ENCODE measurements at regions of chr5 and their contacts with region 1.

Region 1: GRCh38 chr5:43389679-43390329 is 22.4 kb downstream of the CCL28 start:
- DNase-seq: peak; percentile 74
- H3K4me3 ChIP-seq: no peak overlapping the region
- H3K27ac ChIP-seq: no peak overlapping the region
- H3K4me1 ChIP-seq: no peaks in the 10 kb centered on the region
- H3K27me3 ChIP-seq: no peaks in the 10 kb centered on the region
- CTCF ChIP-seq: peak; percentile 50 to 91 (median 82)
- POLR2A ChIP-seq: no peak

Region 2: DNA sequence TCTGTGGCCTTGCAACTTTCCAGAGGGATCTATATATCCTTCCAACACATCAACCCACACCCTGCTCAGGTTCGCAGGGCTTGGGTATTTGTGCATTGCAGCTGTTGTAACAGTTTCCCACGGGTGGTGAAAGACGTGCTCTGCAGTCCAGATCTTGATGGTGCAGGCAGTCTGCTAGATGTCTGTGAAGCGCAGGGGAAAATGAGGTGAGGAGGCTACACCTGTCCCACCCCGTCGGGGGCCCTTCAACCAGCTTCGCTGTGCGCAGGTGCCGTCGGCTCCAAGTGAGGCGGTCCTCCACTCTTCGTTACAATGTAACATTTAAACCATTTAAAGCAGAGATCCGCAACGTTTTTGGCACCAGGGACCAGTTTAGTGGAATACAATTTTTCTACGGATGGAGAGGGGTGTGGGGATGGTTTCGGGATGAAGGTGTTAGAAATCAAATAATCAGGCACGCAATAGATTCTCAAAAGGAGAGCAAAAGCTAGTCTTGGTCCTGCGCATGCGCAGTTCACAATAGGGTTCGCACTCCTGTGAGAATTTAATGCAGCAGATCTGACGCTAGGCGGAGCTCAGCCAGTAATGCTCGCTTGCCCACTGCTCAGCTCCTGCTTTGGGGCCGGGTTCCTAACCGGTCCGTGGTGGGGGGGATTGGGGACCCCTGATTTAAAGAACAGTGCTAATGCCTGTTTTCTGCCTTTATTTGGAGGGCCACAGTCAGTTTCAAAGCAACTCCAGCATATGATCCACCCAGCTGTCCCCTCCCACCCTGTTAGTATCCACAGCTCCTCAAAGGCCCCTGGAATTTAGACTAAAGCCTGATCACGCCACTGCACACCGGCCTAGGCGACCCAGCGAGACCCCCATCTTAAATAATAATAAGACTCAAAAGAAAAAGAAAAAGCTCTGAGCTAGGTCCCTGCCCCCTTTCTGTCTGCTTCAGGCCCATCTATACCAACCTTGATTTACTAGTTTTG is 481.0 kb before region 1 on chr5:
- intact Hi-C with region 1: loop called (anchors 10 kb)
- DNase-seq: peak; percentile 90
- H3K4me3 ChIP-seq: peak overlapping the region; percentile 19 to 32
- H3K27ac ChIP-seq: no peak overlapping the region
- H3K4me1 ChIP-seq: no peaks in the 10 kb centered on the region
- H3K27me3 ChIP-seq: no peaks in the 10 kb centered on the region
- CTCF ChIP-seq: peak; percentile 28 to 90 (median 82)
- POLR2A ChIP-seq: no peak

Region 3: DNA sequence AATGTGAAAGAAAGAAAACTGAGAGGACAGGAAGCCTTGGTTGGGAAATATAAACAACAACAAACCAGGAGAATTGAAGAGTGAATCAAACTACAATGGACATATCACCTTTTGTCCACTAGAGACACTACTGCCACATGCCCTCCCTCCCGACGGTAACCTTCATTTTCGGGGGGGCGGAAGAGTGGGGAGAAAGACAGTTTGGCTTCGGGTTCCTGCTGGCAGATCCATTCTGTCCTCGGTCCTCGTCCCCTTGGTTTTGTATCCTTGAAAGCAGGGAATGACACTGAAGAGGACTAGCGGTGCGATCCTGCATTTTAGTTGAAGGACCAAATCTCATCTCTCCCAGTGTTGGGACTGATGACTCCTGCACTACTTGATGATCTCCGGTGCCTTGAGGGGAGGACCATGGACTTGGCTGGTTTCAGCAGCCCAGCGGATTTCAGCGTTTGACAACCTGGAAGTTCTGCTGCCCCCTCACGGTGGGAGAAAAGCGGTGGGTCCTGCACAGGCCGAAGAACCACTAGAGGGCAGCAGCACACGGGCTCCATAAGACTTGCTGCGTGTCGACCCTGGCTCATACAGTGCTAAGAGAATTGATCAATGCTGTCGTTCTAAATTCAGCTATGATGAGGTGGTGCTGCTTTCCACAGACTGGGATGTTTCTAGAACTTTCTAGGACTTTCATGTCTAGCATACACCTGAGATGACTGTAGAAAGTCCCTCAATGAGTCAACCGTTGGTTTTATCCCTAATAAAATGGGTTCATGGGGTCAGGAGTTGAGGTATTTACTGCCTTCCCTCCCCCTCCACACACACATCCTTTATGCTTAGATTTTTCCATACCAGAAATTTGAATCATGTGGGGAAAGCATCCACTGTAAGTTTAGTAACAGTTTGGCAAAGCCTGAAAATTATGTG is 284.2 kb before region 1 on chr5:
- intact Hi-C with region 1: loop called (anchors 5 kb)
- DNase-seq: peak; percentile 89
- H3K4me3 ChIP-seq: peak overlapping the region; percentile 15 to 31
- H3K27ac ChIP-seq: peak overlapping the region; percentile 64 to 73
- H3K4me1 ChIP-seq: no peaks in the 10 kb centered on the region
- H3K27me3 ChIP-seq: no peaks in the 10 kb centered on the region
- CTCF ChIP-seq: peak; percentile 98 to 99 (median 98)
- POLR2A ChIP-seq: no peak

Region 4: GRCh38 chr5:43305948-43306565 is 83.7 kb before region 1 on chr5:
- intact Hi-C with region 1: loop called (anchors 10 kb)
- DNase-seq: peak; percentile 50
- H3K4me3 ChIP-seq: no peak overlapping the region
- H3K27ac ChIP-seq: no peak overlapping the region
- H3K4me1 ChIP-seq: peaks cover 5% of the 10 kb centered on the region
- H3K27me3 ChIP-seq: no peaks in the 10 kb centered on the region
- CTCF ChIP-seq: peak in 3 of 4 experiments; percentile 59 to 81 (median 76)
- POLR2A ChIP-seq: no peak

Region 5: GRCh38 chr5:43484106-43484849 is 94.5 kb after region 1 on chr5:
- intact Hi-C with region 1: loop called (anchors 10 kb)
- DNase-seq: peak; percentile 81
- H3K4me3 ChIP-seq: peak overlapping the region; percentile 76 to 93
- H3K27ac ChIP-seq: peak overlapping the region; percentile 95 to 96
- H3K4me1 ChIP-seq: no peaks in the 10 kb centered on the region
- H3K27me3 ChIP-seq: no peaks in the 10 kb centered on the region
- CTCF ChIP-seq: peak; percentile 52 to 81 (median 74)
- POLR2A ChIP-seq: no peak

Region 6: DNA sequence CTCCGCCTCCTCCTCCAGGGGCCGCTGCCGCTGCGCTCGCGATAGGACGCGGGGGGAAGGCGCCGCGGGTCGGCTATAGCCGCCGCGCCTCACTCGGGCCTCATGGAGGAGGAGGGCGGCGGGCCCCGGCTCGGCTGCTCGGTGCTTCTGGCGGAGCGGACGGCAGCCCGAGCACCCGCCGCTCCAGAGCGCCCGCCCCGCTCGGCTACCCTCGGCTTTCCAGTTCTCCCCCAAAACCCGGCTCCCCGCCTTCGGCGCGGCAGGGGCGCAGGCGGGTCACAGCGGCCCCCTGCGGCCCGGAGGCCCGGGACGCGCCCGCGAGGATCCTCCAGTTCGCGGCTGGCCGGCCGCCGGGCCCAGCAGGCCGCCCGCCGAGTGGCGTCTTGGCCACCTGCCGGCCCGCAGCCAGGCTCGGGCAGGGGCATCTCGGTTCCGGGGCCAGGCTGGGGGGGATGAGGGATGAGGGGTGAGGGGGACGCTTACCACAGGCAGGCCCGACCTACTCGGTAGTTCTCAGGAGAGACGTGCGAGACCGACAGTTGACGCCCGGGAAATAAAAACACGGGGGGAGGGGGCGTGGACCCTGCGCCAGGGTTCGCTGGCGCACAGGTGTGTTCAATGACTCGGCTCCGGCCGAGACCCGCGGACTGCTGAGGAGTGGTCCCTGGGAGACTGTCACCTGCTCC is 167.2 kb after region 1 on chr5 and contains the start of gene PAIP1:
- intact Hi-C with region 1: no loop called
- DNase-seq: peak; percentile 73
- H3K4me3 ChIP-seq: peak within 1 kb of the TSS; percentile 70 to 85
- H3K27ac ChIP-seq: peak within 1 kb of the TSS; percentile 93 to 97
- H3K4me1 ChIP-seq: no peaks in the 10 kb centered on the region
- H3K27me3 ChIP-seq: no peaks in the 10 kb centered on the region
- CTCF ChIP-seq: peak; percentile 48 to 71 (median 55)
- POLR2A ChIP-seq: peak; percentile 22
- total RNA-seq, gene PAIP1: 84.6 to 150 TPM

Measured in prostate gland (tissue), 2 donors.